Calu3 (cell line): ENCODE measurements at regions of chr14 and their contacts with region 1.

Region 1: GRCh38 chr14:52824507-52824906 is 33.1 kb upstream of the GNPNAT1 start:
- DNase-seq: no peak
- H3K4me3 Mint-ChIP-seq: no peak overlapping the region
- H3K27ac Mint-ChIP-seq: no peak overlapping the region
- H3K4me1 Mint-ChIP-seq: no peaks in the 10 kb centered on the region
- H3K27me3 Mint-ChIP-seq: no peaks in the 10 kb centered on the region
- CTCF ChIP-seq: no peak

Region 2: DNA sequence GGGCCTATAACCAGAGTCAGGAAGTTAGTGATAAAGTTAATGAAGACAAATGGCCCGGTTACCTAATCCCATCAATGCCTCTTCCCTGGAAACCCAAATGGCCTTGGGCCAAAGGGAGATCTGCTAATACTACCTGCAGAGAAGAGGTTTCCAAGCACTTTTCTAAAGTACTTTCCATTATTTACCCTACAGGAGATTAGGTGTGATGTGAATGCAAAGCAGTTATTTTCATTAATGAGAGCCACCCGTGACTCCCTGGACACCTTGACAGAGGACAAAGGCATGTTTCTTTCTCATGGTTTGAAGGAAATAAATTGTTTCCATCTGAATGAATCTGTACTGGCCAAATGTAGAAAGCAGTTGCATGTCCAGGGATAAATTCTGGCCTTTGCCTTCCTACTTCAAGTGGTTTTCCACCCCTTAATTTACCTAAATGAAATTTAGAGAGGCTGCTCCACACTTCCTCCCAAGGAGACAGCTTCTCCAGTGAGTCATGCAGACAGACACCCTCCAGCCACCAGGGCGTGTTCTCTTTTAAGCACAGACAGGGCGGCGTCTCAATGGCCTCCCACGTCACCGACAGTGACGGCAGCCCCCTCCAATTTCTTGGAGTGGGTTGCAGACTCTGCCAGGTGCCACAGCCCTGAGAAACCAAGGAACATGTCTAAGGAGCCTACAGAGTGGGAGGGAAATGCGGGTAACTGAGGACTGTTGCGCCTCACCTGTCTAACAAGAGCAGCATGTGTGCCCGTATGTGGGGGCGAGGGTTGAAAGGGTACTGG is 10.8 kb after region 1 on chr14:
- CTCF ChIA-PET with region 1: no interaction called
- intact Hi-C with region 1: no loop called
- DNase-seq: no peak
- H3K4me3 Mint-ChIP-seq: no peak overlapping the region
- H3K27ac Mint-ChIP-seq: no peak overlapping the region
- H3K4me1 Mint-ChIP-seq: peaks cover 6% of the 10 kb centered on the region
- H3K27me3 Mint-ChIP-seq: no peaks in the 10 kb centered on the region
- CTCF ChIP-seq: no peak

Region 3: DNA sequence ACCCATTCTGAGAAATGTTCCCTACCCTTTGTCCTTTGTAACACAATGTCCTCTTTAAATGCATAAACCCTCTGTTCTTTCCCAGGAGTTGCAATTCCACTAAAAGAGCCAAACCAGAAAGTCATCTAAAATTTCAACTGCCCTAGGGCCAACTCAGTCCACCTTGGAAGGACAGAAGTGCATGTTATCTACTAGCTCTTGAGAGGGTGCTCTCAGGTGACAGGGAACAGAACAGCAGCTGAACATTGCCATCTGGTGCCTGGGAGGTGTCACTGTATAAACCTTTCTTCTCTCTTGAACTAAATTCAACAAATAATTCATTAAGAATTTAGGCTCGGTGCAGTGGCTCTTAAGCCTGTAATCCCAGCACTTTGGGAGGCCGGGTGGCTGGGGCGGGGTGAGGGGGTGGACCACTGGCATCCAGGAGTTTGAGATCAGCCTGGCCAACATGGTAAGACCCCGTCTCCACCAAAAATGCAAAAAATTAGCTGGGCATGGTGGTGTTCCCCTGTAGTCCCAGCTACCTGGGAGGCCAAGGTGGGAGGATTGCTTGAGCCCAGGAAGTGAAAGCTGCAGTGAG is 136.6 kb after region 1 on chr14:
- CTCF ChIA-PET with region 1: interaction called, 12 read pairs
- intact Hi-C with region 1: loop called (anchors 1 kb)
- DNase-seq: peak; percentile 68
- H3K4me3 Mint-ChIP-seq: no peak overlapping the region
- H3K27ac Mint-ChIP-seq: no peak overlapping the region
- H3K4me1 Mint-ChIP-seq: peaks cover 18% of the 10 kb centered on the region
- H3K27me3 Mint-ChIP-seq: no peaks in the 10 kb centered on the region
- CTCF ChIP-seq: peak; percentile 61

Region 4: DNA sequence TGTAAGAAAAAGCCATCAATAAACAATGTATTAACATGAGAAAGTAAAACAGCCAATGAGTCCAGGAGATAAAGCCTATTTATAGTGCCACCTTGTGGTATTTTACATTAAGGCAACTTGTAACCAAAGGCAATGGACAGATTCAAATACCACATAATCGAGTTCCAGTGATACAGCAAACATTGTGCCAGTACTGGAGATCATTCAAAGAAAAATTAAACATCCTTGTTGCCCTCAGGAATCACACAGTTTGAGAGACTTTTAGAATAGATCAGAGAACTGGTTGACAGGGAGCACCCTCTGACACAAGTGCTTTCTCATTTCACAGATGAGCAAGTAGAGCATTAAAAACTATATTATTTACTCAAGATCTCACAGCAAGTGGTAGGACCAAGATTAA is 230.5 kb after region 1 on chr14:
- CTCF ChIA-PET with region 1: no interaction called
- intact Hi-C with region 1: loop called (anchors 2 kb)
- DNase-seq: no peak
- H3K4me3 Mint-ChIP-seq: no peak overlapping the region
- H3K27ac Mint-ChIP-seq: no peak overlapping the region
- H3K4me1 Mint-ChIP-seq: no peaks in the 10 kb centered on the region
- H3K27me3 Mint-ChIP-seq: no peaks in the 10 kb centered on the region
- CTCF ChIP-seq: no peak

Region 5: GRCh38 chr14:53306267-53306721 is 481.8 kb after region 1 on chr14:
- CTCF ChIA-PET with region 1: no interaction called
- intact Hi-C with region 1: loop called (anchors 2 kb)
- DNase-seq: peak; percentile 41
- H3K4me3 Mint-ChIP-seq: peak overlapping the region; percentile 47
- H3K27ac Mint-ChIP-seq: no peak overlapping the region
- H3K4me1 Mint-ChIP-seq: no peaks in the 10 kb centered on the region
- H3K27me3 Mint-ChIP-seq: peaks cover 29% of the 10 kb centered on the region
- CTCF ChIP-seq: peak; percentile 53